HCT116 (cell line): ENCODE measurements at regions of chr19 and their contacts with region 1.

Region 1: GRCh38 chr19:48674921-48675824 is 2.4 kb upstream of the NTN5 start:
- DNase-seq: peak; percentile 76
- ATAC-seq: peak; percentile 90
- H3K4me3 ChIP-seq: no peak overlapping the region
- H3K27ac ChIP-seq: peak overlapping the region; percentile 9; the same call in 1 of the 2 replicates
- H3K4me1 ChIP-seq: peaks cover 13 to 25% of the 10 kb centered on the region in 2 experiments
- H3K27me3 ChIP-seq: no peaks in the 10 kb centered on the region
- CTCF ChIP-seq: peak; percentile 85 to 90 (median 89)
- POLR2A ChIP-seq: no peak
- RAD21 ChIP-seq: peak; percentile 91

Region 2: DNA sequence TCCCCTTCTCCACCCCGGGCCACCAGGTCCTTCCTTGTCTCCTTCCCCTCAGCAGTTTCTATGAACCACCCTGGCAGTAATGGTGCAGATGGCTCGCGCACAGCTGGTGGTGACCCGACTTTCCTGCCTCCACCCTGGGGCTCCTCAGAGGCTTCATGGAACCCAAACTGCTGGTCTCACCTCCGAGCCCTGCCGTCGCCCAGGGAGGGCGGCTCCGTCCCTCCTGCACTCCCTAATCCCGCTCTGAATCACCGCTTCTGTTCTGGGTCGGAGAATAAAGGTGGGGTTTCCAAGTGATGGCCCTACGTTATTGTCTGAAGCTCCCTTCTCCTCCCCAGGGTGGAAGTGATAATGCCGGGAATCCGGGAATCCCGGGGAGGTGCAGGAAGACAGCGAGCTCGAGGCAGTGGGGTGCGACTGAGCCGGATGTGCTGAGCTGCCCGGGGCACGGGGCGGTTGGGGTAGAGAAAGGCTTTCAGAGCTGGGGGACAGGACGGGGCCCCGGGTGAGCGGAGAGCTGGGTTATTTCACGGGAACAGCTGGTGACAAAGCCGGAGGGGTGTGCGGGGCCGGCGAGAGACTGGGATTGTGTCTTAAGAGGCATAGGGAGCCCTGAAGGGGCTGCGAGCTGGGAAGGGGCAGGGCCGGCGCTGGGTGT is 21.3 kb after region 1 on chr19:
- CTCF ChIA-PET with region 1: interaction called, 12 read pairs
- POLR2A ChIA-PET with region 1: interaction called, 3 read pairs
- RAD21 ChIA-PET with region 1: interaction called in 1 of 2 experiments, 4 read pairs
- intact Hi-C with region 1: no loop called
- DNase-seq: no peak
- ATAC-seq: peak; percentile 52
- H3K4me3 ChIP-seq: peak overlapping the region; percentile 75 to 85
- H3K27ac ChIP-seq: peak overlapping the region; percentile 83
- H3K4me1 ChIP-seq: peaks cover 32 to 55% of the 10 kb centered on the region in 2 experiments
- H3K27me3 ChIP-seq: no peaks in the 10 kb centered on the region
- CTCF ChIP-seq: no peak
- POLR2A ChIP-seq: peak; percentile 2
- RAD21 ChIP-seq: no peak

Region 3: DNA sequence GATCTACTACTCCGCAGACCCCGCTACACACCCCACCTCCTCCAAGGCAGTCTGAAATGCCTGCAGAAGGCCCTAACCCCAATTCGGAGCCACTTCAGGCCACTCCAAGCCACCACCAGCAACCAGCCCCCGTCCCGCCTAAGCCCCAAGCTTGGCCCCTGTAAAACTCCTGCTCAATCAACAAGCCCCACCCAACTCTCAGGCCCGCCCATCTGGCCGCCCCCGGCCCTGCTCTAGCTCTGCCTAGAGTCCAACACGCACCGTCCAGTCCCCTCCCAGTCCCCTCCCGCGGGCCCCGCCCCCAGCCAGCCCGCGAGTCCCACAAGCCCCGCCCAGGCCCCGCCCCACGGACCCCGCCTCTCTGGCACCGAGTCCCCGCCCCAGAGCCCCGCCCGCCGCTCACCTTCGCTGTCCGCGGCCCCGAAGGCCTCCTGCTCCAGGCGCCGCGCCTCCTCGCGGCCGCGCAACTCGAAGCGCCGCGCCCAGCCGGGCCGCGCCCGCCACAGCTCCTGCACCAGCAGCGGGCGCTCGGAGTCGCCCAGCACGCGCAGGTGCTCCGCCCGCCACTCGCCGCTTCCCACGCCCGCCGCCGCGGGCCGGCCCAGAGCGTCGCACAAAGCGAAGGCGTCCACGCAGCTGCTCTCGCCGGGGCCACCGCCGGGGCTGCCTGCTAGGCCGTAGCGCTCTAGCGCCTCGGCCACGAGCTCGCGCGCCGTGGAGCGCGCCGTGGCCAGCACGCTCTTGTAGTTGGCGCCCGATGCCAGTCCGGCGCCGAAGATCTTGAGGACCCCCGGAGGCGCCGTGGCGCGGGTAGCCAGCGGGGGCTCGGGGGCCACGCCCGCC is 63.6 kb after region 1 on chr19:
- CTCF ChIA-PET with region 1: interaction called, 16 read pairs
- POLR2A ChIA-PET with region 1: no interaction called
- RAD21 ChIA-PET with region 1: no interaction called
- intact Hi-C with region 1: loop called (anchors 2 kb)
- DNase-seq: peak; percentile 82
- ATAC-seq: peak; percentile 91
- H3K4me3 ChIP-seq: peak overlapping the region in 1 of 2 experiments; percentile 18; a peak in 1 of 4 replicates
- H3K27ac ChIP-seq: peak overlapping the region; percentile 53
- H3K4me1 ChIP-seq: peaks cover 25 to 40% of the 10 kb centered on the region in 2 experiments
- H3K27me3 ChIP-seq: no peaks in the 10 kb centered on the region
- CTCF ChIP-seq: peak in 2 of 3 experiments; percentile 34 to 60; a peak in 5 of 6 replicates
- POLR2A ChIP-seq: no peak
- RAD21 ChIP-seq: no peak; the same call in 1 of the 2 replicates

Region 4: GRCh38 chr19:49094505-49095482 is 419.6 kb after region 1 on chr19:
- CTCF ChIA-PET with region 1: no interaction called
- POLR2A ChIA-PET with region 1: no interaction called
- RAD21 ChIA-PET with region 1: no interaction called
- intact Hi-C with region 1: no loop called
- DNase-seq: no peak
- ATAC-seq: no peak
- H3K4me3 ChIP-seq: no peak overlapping the region
- H3K27ac ChIP-seq: 0 out of 2 replicates have a peak overlapping the region, but pooled peaks have one; percentile 35
- H3K4me1 ChIP-seq: peaks cover 0 to 3% of the 10 kb centered on the region in 2 experiments; a peak in 2 of 4 replicates
- H3K27me3 ChIP-seq: no peaks in the 10 kb centered on the region
- CTCF ChIP-seq: no peak
- POLR2A ChIP-seq: no peak
- RAD21 ChIP-seq: no peak